Pancreas (tissue), 10 donors: ENCODE measurements at regions of chr16 and their contacts with region 1.

Region 1: DNA sequence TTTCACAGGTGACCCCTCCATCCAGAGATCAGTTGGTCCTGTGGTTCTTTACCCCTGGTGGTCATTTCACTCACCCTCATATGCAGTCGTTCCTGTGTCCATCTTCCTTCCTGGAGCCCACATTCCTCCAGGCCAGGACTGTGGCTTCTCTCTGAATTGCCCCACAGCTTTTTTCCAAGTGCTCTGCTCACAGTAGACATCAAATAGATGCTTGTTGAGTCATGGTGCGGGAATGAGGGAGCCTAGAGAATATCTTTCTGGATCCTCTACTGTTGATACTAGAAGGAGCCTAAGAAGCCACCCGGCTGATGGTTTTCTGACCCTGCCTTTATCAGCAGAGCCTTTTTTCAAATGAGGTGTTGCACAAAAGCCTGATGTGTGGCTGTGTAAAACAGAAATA is 10.4 kb downstream of the USB1 start:
- DNase-seq: no peak
- ATAC-seq: no peak
- H3K4me3 ChIP-seq: no peak overlapping the region
- H3K27ac ChIP-seq: no peak overlapping the region
- H3K4me1 ChIP-seq: no peaks in the 10 kb centered on the region
- H3K27me3 ChIP-seq: no peaks in the 10 kb centered on the region
- CTCF ChIP-seq: no peak

Region 2: GRCh38 chr16:57576429-57576870 is 435.2 kb before region 1 on chr16:
- intact Hi-C with region 1: loop called in 1 of 3 experiments (anchors 10 kb)
- DNase-seq: peak; percentile 53 to 91 (median 82)
- ATAC-seq: peak; percentile 81 to 94 (median 91)
- H3K4me3 ChIP-seq: no peak overlapping the region
- H3K27ac ChIP-seq: no peak overlapping the region
- H3K4me1 ChIP-seq: no peaks in the 10 kb centered on the region
- H3K27me3 ChIP-seq: no peaks in the 10 kb centered on the region
- CTCF ChIP-seq: peak; percentile 83 to 93 (median 91)

Region 3: GRCh38 chr16:57871456-57871855 is 140.2 kb before region 1 on chr16:
- intact Hi-C with region 1: no loop called
- DNase-seq: no peak
- ATAC-seq: no peak
- H3K4me3 ChIP-seq: no peak overlapping the region
- H3K27ac ChIP-seq: no peak overlapping the region
- H3K4me1 ChIP-seq: no peaks in the 10 kb centered on the region
- H3K27me3 ChIP-seq: no peaks in the 10 kb centered on the region
- CTCF ChIP-seq: no peak